ENCODE measurements at regions of chr2 and their contacts with region 1.

Region 1: DNA sequence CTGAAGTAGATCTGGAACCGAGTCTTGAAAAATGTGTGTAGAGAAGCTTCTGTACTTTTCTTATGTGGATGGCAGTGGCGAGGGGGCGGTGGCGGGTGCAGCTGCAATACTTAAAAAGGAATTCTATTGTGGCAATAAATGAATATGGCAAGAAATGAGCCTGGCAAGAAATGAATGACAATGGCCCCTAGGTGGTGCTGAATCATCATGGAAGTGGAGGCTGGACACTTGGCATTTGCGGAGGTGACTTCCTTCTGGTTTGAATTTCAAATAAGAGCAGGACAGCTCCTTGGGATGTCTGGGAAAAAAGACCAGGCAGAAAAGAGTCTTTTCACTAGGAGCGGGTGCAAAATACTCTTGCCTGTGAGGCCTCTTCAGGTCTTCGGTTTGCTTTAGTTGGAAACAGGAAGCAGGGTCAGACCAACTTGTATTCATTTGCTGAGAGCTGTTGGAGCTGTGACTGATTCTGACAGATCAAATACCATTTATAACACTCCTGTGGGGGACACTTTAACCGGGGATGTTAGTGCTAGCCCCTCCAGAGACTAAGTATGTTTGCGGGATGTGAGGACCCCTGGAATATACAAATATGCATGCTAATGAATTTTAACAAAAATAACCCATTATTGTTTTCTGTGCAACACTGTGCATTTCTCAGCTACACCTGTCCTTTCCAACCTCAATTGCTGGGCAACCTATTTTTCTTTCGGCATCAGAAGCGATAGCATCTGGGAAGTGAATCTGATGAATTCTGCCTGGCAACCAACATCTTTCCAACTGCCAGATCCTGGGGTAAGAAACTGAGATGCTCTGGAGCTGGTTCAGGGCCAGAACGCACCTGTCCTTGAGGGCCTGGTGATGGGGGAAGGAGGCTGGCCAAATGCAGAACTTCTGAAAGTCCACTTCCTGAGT is 35.4 kb downstream of the FASTKD2 start:
- DNase-seq: no peak
- ATAC-seq: peak; percentile 85
- H3K4me3 ChIP-seq: no peak overlapping the region
- H3K27ac ChIP-seq: no peak overlapping the region
- H3K4me1 ChIP-seq: peaks cover 3% of the 10 kb centered on the region
- H3K27me3 ChIP-seq: no peaks in the 10 kb centered on the region
- CTCF ChIP-seq: peak; percentile 55 to 80 (median 71); a peak in 5 of 6 replicates
- EP300 ChIP-seq: no peak
- POLR2A ChIP-seq: no peak
- RAD21 ChIP-seq: peak; percentile 90

Region 2: GRCh38 chr2:206693399-206694137 is 107.2 kb before region 1 on chr2:
- CTCF ChIA-PET with region 1: interaction called, 19 read pairs
- POLR2A ChIA-PET with region 1: no interaction called
- RAD21 ChIA-PET with region 1: interaction called, 3 read pairs
- SMC1A ChIA-PET with region 1: no interaction called
- in situ Hi-C with region 1: no loop called
- intact Hi-C with region 1: no loop called
- DNase-seq: peak; percentile 24
- ATAC-seq: peak; percentile 84
- H3K4me3 ChIP-seq: no peak overlapping the region
- H3K27ac ChIP-seq: no peak overlapping the region
- H3K4me1 ChIP-seq: no peaks in the 10 kb centered on the region
- H3K27me3 ChIP-seq: no peaks in the 10 kb centered on the region
- CTCF ChIP-seq: peak; percentile 41 to 77 (median 61); a peak in 5 of 6 replicates
- EP300 ChIP-seq: no peak
- POLR2A ChIP-seq: no peak
- RAD21 ChIP-seq: peak; percentile 94

Region 3: GRCh38 chr2:206783718-206784117 is 17.0 kb before region 1 on chr2:
- CTCF ChIA-PET with region 1: interaction called, 12 read pairs
- POLR2A ChIA-PET with region 1: interaction called, 3 read pairs
- RAD21 ChIA-PET with region 1: no interaction called
- SMC1A ChIA-PET with region 1: interaction called, 4 read pairs
- in situ Hi-C with region 1: no loop called
- intact Hi-C with region 1: no loop called
- DNase-seq: no peak
- ATAC-seq: peak; percentile 74
- H3K4me3 ChIP-seq: no peak overlapping the region
- H3K27ac ChIP-seq: no peak overlapping the region
- H3K4me1 ChIP-seq: no peaks in the 10 kb centered on the region
- H3K27me3 ChIP-seq: no peaks in the 10 kb centered on the region
- CTCF ChIP-seq: peak; percentile 12 to 47 (median 37); a peak in 3 of 6 replicates
- EP300 ChIP-seq: no peak
- POLR2A ChIP-seq: no peak
- RAD21 ChIP-seq: no peak

Region 4: GRCh38 chr2:206790311-206790935 is 10.3 kb before region 1 on chr2:
- CTCF ChIA-PET with region 1: interaction called, 13 read pairs
- POLR2A ChIA-PET with region 1: no interaction called
- RAD21 ChIA-PET with region 1: interaction called, 3 read pairs
- SMC1A ChIA-PET with region 1: interaction called, 9 read pairs
- in situ Hi-C with region 1: no loop called
- intact Hi-C with region 1: no loop called
- DNase-seq: no peak
- ATAC-seq: no peak
- H3K4me3 ChIP-seq: no peak overlapping the region
- H3K27ac ChIP-seq: no peak overlapping the region
- H3K4me1 ChIP-seq: no peaks in the 10 kb centered on the region
- H3K27me3 ChIP-seq: no peaks in the 10 kb centered on the region
- CTCF ChIP-seq: no peak
- EP300 ChIP-seq: no peak
- POLR2A ChIP-seq: no peak
- RAD21 ChIP-seq: no peak

Region 5: DNA sequence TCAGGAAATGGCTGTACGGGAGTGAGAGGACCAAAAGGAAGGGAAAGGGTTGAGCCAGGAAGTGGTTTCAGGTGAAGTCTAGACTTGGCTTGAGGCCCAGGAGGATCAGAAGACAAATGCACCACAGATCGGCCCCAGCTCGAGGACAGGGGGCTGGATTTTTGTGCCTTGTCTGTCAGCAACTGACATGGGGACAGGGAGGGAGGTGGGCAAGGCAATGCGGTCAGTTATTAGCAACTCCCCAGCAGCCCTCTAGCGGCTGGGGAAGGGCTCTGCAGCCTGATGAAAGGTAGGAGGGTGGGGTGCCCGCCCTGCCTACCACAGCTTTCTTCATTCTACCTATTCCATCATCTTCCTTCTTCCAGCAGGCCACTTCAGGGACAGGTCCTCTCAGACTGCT is 188.5 kb after region 1 on chr2:
- CTCF ChIA-PET with region 1: interaction called, 28 read pairs
- POLR2A ChIA-PET with region 1: interaction called, 3 read pairs
- RAD21 ChIA-PET with region 1: interaction called, 5 read pairs
- SMC1A ChIA-PET with region 1: interaction called, 4 read pairs
- in situ Hi-C with region 1: no loop called
- intact Hi-C with region 1: loop called (anchors 1 kb)
- DNase-seq: no peak
- ATAC-seq: peak; percentile 99
- H3K4me3 ChIP-seq: no peak overlapping the region
- H3K27ac ChIP-seq: no peak overlapping the region
- H3K4me1 ChIP-seq: no peaks in the 10 kb centered on the region
- H3K27me3 ChIP-seq: no peaks in the 10 kb centered on the region
- CTCF ChIP-seq: peak; percentile 72 to 90 (median 86)
- EP300 ChIP-seq: no peak
- POLR2A ChIP-seq: no peak
- RAD21 ChIP-seq: peak; percentile 53

Region 6: DNA sequence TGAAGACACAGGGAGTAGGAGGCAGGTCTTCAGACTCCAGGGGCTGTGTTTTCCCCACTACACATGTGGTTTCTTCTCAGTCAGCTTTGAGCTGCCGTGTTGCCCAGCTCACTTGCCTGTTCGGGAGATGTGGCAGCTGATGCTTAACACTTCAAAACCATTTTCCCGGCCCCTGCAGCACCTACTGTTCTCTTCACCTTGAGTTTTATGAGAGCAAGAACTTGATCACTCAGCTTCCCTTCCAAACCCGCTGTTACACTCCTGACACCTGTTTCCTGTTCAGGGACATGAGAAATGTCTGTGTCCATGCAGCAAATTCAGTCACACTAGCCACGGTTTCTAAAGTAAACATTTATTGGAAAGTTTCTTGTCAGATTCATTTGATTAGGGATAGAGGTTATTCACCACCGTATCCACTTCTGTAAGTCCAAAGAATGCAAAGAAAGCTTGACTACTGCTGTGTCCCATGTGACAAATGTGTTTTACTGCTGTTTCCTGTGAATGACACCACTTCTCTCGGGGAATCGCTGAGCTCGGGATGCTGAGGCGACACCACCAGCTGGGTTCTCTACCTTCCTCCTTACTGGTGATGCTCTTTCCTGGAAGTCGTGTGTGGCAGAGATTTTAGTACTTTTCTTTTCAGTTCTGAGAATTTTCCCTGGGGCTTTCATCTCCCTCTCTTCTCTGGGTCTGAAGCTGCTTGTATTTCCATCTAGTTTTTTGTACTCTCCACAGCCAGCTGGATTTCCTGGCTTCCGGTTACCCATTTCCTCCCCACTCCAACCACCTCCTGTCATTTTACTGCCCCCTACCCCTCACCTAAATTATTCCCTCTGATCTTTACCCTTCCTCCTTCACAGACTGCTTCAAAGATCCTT is 273.3 kb after region 1 on chr2:
- CTCF ChIA-PET with region 1: no interaction called
- POLR2A ChIA-PET with region 1: no interaction called
- RAD21 ChIA-PET with region 1: no interaction called
- SMC1A ChIA-PET with region 1: no interaction called
- in situ Hi-C with region 1: no loop called
- intact Hi-C with region 1: loop called (anchors 10 kb)
- DNase-seq: no peak
- ATAC-seq: peak; percentile 56
- H3K4me3 ChIP-seq: no peak overlapping the region
- H3K27ac ChIP-seq: no peak overlapping the region
- H3K4me1 ChIP-seq: peaks cover 23% of the 10 kb centered on the region
- H3K27me3 ChIP-seq: no peaks in the 10 kb centered on the region
- CTCF ChIP-seq: no peak
- EP300 ChIP-seq: no peak
- POLR2A ChIP-seq: no peak
- RAD21 ChIP-seq: no peak

Region 7: DNA sequence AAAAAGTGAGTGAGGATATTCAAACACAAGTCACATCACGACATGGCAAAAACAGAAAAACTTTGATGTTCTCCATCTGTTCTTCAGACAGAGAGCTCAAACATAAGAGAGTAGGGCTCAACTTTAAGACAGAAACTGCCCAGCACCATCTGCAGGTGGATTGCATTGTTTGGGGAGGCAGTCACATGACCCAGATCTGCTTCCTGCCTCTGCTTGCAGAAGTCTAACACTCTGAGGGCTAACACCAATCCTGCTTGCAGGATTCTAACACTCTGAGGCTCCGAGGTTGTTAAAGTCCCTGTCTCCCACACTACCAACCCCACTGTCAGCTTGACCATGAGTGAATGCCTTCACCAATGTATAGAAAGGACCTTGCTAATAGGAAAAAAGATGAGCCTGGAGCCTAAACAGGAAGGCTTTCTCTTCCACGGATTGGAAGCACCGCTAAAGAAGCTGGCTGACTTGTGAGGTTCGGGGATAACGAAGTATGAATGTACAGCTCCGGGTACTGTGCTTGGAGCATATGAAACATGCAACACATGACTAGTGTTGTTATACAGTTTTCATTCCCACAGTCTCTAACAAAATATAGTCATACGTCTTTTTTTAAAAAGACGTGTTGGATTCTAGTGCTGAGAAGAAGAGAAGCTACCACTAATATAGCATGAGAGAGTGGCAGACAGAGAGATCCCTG is 552.4 kb after region 1 on chr2:
- CTCF ChIA-PET with region 1: interaction called, 3 read pairs
- POLR2A ChIA-PET with region 1: no interaction called
- RAD21 ChIA-PET with region 1: interaction called, 5 read pairs
- SMC1A ChIA-PET with region 1: interaction called, 3 read pairs
- in situ Hi-C with region 1: no loop called
- intact Hi-C with region 1: loop called (anchors 10 kb)
- DNase-seq: no peak
- ATAC-seq: peak; percentile 90
- H3K4me3 ChIP-seq: no peak overlapping the region
- H3K27ac ChIP-seq: no peak overlapping the region
- H3K4me1 ChIP-seq: peaks cover 7% of the 10 kb centered on the region; the same call in 1 of the 2 replicates
- H3K27me3 ChIP-seq: no peaks in the 10 kb centered on the region
- CTCF ChIP-seq: peak in 1 of 3 experiments; percentile 45; a peak in 1 of 6 replicates
- EP300 ChIP-seq: no peak
- POLR2A ChIP-seq: no peak
- RAD21 ChIP-seq: peak; percentile 55